Right ventricle myocardium superior (tissue), 1 donor: ENCODE measurements at regions of chr14 and their contacts with region 1.

Region 1: GRCh38 chr14:94129111-94129757 is at the start of gene IFI27L2:
- DNase-seq: peak; percentile 85
- ATAC-seq: peak; percentile 97
- total RNA-seq, gene IFI27L2: 50.1 TPM

Region 2: GRCh38 chr14:94080471-94081289 is 48.6 kb before region 1 on chr14 and contains the start of gene DDX24:
- intact Hi-C with region 1: loop called (anchors 5 kb)
- DNase-seq: peak; percentile 99
- ATAC-seq: peak; percentile 99
- total RNA-seq, gene DDX24: 181 TPM

Region 3: GRCh38 chr14:94173885-94174603 is 44.8 kb after region 1 on chr14 and contains the start of gene PPP4R4:
- intact Hi-C with region 1: no loop called
- DNase-seq: peak; percentile 89
- ATAC-seq: peak; percentile 92
- total RNA-seq, gene PPP4R4: not detected